Gastrocnemius medialis (tissue), 4 donors: ENCODE measurements at regions of chr6 and their contacts with region 1.

Region 1: DNA sequence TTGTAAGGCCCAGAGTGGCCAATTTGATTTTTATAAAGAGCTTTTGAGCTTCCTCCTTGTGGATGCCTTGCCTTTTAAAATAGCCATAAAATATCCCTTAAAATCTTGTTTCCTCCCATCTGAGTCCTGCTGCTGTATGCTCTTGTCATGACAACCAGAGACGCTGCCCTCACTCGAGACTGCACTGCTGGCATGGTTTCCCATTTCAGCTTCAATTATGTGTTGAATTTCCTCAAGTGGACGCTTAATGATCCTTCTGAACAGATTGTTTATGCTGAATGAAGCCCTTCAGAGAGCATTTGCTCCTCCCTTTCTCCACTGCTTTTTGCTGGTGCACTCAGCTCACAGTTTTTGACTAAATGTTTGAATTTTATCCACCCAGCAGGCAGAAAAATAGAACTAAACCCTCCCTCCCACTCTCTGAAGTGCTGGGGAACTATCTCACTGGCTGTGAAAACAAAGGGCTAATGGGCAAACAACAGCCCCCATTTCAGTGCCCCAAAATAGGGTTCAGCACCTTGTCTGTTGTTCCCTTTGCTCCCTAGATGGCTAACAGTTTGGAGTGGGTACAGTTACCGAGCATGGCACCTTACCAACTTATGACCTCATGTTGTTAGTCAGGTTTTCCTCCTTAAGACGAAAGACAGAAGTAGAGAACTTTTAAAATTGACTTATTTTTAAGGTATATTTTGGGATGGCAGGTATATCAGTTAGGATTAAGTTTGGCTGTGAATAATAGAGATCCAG is 45.5 kb upstream of the RNF8 start:
- DNase-seq: peak in 1 of 2 donors; percentile 33
- ATAC-seq: peak; percentile 48 to 60
- H3K4me3 ChIP-seq: no peak overlapping the region
- H3K27ac ChIP-seq: peak overlapping the region in 1 of 4 donors; percentile 44
- H3K4me1 ChIP-seq: peaks cover 8 to 14% of the 10 kb centered on the region in 2 donors
- H3K27me3 ChIP-seq: no peaks in the 10 kb centered on the region
- CTCF ChIP-seq: no peak
- POLR2A ChIP-seq: no peak

Region 2: GRCh38 chr6:36955671-36956445 is 352.4 kb before region 1 on chr6:
- in situ Hi-C with region 1: no loop called
- intact Hi-C with region 1: no loop called
- DNase-seq: no peak
- ATAC-seq: peak; percentile 54 to 56
- H3K4me3 ChIP-seq: no peak overlapping the region
- H3K27ac ChIP-seq: peak overlapping the region in 2 of 4 donors; percentile 7 to 28
- H3K4me1 ChIP-seq: no peaks in the 10 kb centered on the region
- H3K27me3 ChIP-seq: no peaks in the 10 kb centered on the region
- CTCF ChIP-seq: no peak
- POLR2A ChIP-seq: no peak

Region 3: GRCh38 chr6:37432916-37433656 is 124.8 kb after region 1 on chr6 and contains the start of gene CMTR1:
- in situ Hi-C with region 1: no loop called
- intact Hi-C with region 1: loop called (anchors 5 kb)
- DNase-seq: peak; percentile 85 to 89
- ATAC-seq: peak; percentile 93 to 95
- H3K4me3 ChIP-seq: peak within 1 kb of the TSS; percentile 84 to 99 (median 95)
- H3K27ac ChIP-seq: peak within 1 kb of the TSS; percentile 82 to 97 (median 90)
- H3K4me1 ChIP-seq: peaks cover 14 to 20% of the 10 kb centered on the region in 2 donors
- H3K27me3 ChIP-seq: no peaks in the 10 kb centered on the region
- CTCF ChIP-seq: peak in 2 of 5 experiments; percentile 36 to 39
- POLR2A ChIP-seq: peak; percentile 50 to 56
- total RNA-seq, gene CMTR1: 18.2 to 34.6 (median 25.4) TPM